ENCODE measurements at regions of chr15 and their contacts with region 1.

Region 1: GRCh38 chr15:87703327-87704111 is 553.0 kb downstream of the NTRK3 start:
- DNase-seq: no peak
- H3K4me3 ChIP-seq: no peak overlapping the region
- H3K27ac ChIP-seq: no peak overlapping the region
- H3K4me1 ChIP-seq: peaks cover 0 to 2% (median 0%) of the 10 kb centered on the region in 4 experiments; a peak in 1 of 7 replicates
- H3K27me3 ChIP-seq: no peaks in the 10 kb centered on the region
- CTCF ChIP-seq: no peak
- EP300 ChIP-seq: no peak
- POLR2A ChIP-seq: no peak
- RAD21 ChIP-seq: no peak

Region 2: GRCh38 chr15:87716422-87716821 is 12.9 kb after region 1 on chr15:
- CTCF ChIA-PET with region 1: interaction called, 10 read pairs
- POLR2A ChIA-PET with region 1: no interaction called
- DNase-seq: no peak
- H3K4me3 ChIP-seq: no peak overlapping the region
- H3K27ac ChIP-seq: no peak overlapping the region
- H3K4me1 ChIP-seq: no peaks in the 10 kb centered on the region
- H3K27me3 ChIP-seq: no peaks in the 10 kb centered on the region
- CTCF ChIP-seq: peak; percentile 36 to 65 (median 49)
- EP300 ChIP-seq: no peak
- POLR2A ChIP-seq: no peak
- RAD21 ChIP-seq: peak; percentile 59 to 70

Measured in H1 (cell line).